Naive thymus-derived CD8-positive, alpha-beta T cell (primary cell): ENCODE measurements at regions of chr21 and their contacts with region 1.

Region 1: GRCh38 chr21:41926117-41926806 is 27.6 kb downstream of the C2CD2 start:
- DNase-seq: peak in 6 of 10 donors; percentile 27 to 71 (median 49)
- ATAC-seq: peak; percentile 88 to 95
- H3K4me3 Mint-ChIP-seq: peak overlapping the region; percentile 89 to 96 (median 95)
- H3K27ac Mint-ChIP-seq: peak overlapping the region; percentile 96 to 100 (median 99)
- H3K4me1 Mint-ChIP-seq: peaks cover 20 to 86% (median 45%) of the 10 kb centered on the region in 4 donors
- H3K27me3 Mint-ChIP-seq: peaks cover 0 to 2% (median 0%) of the 10 kb centered on the region in 5 donors

Region 2: GRCh38 chr21:41879190-41879998 is 46.9 kb before region 1 on chr21 and contains the start of gene PRDM15:
- POLR2A ChIA-PET with region 1: interaction called, 49 read pairs
- DNase-seq: peak; percentile 58 to 87 (median 78)
- ATAC-seq: peak; percentile 72 to 78
- H3K4me3 Mint-ChIP-seq: peak within 1 kb of the TSS; percentile 81 to 95 (median 91)
- H3K27ac Mint-ChIP-seq: peak within 1 kb of the TSS; percentile 88 to 97 (median 95)
- H3K4me1 Mint-ChIP-seq: peaks cover 14 to 44% (median 32%) of the 10 kb centered on the region in 4 donors
- H3K27me3 Mint-ChIP-seq: no peaks in the 10 kb centered on the region
- polyA plus RNA-seq, gene PRDM15: 0.77 to 2.9 (median 2.4) TPM